CD8-positive, alpha-beta T cell (primary cell): ENCODE measurements at regions of chr6 and their contacts with region 1.

Region 1: GRCh38 chr6:25223490-25223991 is 55.6 kb upstream of the CARMIL1 start:
- DNase-seq: peak; percentile 19 to 79 (median 66)
- ATAC-seq: peak; percentile 61
- H3K4me3 ChIP-seq: peak overlapping the region in 1 of 2 experiments; percentile 23
- H3K4me3 Mint-ChIP-seq: peak overlapping the region; percentile 72
- H3K27ac ChIP-seq: no peak overlapping the region
- H3K27ac Mint-ChIP-seq: no peak overlapping the region
- H3K4me1 ChIP-seq: peaks cover 6% of the 10 kb centered on the region
- H3K4me1 Mint-ChIP-seq: peaks cover 10% of the 10 kb centered on the region
- H3K27me3 ChIP-seq: no peaks in the 10 kb centered on the region
- H3K27me3 Mint-ChIP-seq: peaks cover 7% of the 10 kb centered on the region
- CTCF ChIP-seq: peak; percentile 96

Region 2: DNA sequence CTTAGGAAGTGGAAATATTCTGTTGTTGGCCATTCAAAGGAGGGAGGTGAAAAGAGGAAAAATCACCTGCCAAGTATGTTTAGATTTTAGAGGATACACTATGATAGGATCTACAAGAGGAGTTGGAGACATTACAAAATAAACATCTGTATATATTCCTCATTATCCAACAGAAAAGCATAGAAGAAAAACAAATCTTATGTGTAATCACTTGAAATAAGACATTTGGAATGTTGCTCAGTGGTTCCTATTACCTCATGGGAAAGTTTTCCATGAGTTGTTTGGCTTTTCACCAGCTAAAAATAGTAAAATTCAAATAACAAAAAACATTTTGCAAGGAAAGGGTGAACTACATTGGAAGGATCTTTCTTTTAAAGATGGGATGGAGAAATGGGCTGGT is 21.0 kb before region 1 on chr6:
- CTCF ChIA-PET with region 1: interaction called, 11 read pairs
- POLR2A ChIA-PET with region 1: no interaction called
- intact Hi-C with region 1: no loop called
- DNase-seq: no peak
- ATAC-seq: no peak
- H3K4me3 ChIP-seq: no peak overlapping the region
- H3K4me3 Mint-ChIP-seq: no peak overlapping the region
- H3K27ac ChIP-seq: no peak overlapping the region
- H3K27ac Mint-ChIP-seq: no peak overlapping the region
- H3K4me1 ChIP-seq: no peaks in the 10 kb centered on the region
- H3K4me1 Mint-ChIP-seq: no peaks in the 10 kb centered on the region
- H3K27me3 ChIP-seq: no peaks in the 10 kb centered on the region
- H3K27me3 Mint-ChIP-seq: no peaks in the 10 kb centered on the region
- CTCF ChIP-seq: no peak

Region 3: DNA sequence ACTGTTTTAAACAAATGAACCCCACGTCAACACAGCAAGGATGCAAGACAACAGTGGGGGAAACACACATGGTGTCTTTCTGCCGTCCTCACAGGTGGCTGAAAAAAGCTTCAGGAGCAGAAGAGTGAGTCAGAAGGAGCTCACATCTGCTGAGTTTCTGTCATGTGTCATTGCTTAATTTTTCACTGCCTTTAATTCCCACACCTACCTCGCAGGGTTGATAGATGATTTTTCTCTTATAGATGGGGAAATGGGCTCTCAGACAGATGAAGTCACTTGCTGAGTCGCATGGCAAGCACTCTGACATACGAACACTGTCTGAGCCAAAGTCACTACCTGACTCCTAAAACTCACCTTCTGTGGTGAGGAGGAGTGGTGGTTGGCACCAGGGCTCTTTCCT is 27.3 kb after region 1 on chr6:
- CTCF ChIA-PET with region 1: interaction called, 12 read pairs
- POLR2A ChIA-PET with region 1: no interaction called
- intact Hi-C with region 1: no loop called
- DNase-seq: no peak
- ATAC-seq: no peak
- H3K4me3 ChIP-seq: no peak overlapping the region
- H3K4me3 Mint-ChIP-seq: no peak overlapping the region
- H3K27ac ChIP-seq: no peak overlapping the region
- H3K27ac Mint-ChIP-seq: no peak overlapping the region
- H3K4me1 ChIP-seq: no peaks in the 10 kb centered on the region
- H3K4me1 Mint-ChIP-seq: no peaks in the 10 kb centered on the region
- H3K27me3 ChIP-seq: no peaks in the 10 kb centered on the region
- H3K27me3 Mint-ChIP-seq: peaks cover 13% of the 10 kb centered on the region
- CTCF ChIP-seq: no peak

Region 4: GRCh38 chr6:25458485-25458884 is 234.9 kb after region 1 on chr6:
- CTCF ChIA-PET with region 1: no interaction called
- POLR2A ChIA-PET with region 1: no interaction called
- intact Hi-C with region 1: no loop called
- DNase-seq: no peak
- ATAC-seq: no peak
- H3K4me3 ChIP-seq: no peak overlapping the region
- H3K4me3 Mint-ChIP-seq: no peak overlapping the region
- H3K27ac ChIP-seq: no peak overlapping the region
- H3K27ac Mint-ChIP-seq: no peak overlapping the region
- H3K4me1 ChIP-seq: no peaks in the 10 kb centered on the region
- H3K4me1 Mint-ChIP-seq: no peaks in the 10 kb centered on the region
- H3K27me3 ChIP-seq: no peaks in the 10 kb centered on the region
- H3K27me3 Mint-ChIP-seq: no peaks in the 10 kb centered on the region
- CTCF ChIP-seq: no peak

Region 5: GRCh38 chr6:25550631-25551030 is 327.1 kb after region 1 on chr6:
- CTCF ChIA-PET with region 1: interaction called, 56 read pairs
- POLR2A ChIA-PET with region 1: no interaction called
- intact Hi-C with region 1: no loop called
- DNase-seq: no peak
- ATAC-seq: no peak
- H3K4me3 ChIP-seq: no peak overlapping the region
- H3K4me3 Mint-ChIP-seq: no peak overlapping the region
- H3K27ac ChIP-seq: no peak overlapping the region
- H3K27ac Mint-ChIP-seq: no peak overlapping the region
- H3K4me1 ChIP-seq: no peaks in the 10 kb centered on the region
- H3K4me1 Mint-ChIP-seq: no peaks in the 10 kb centered on the region
- H3K27me3 ChIP-seq: no peaks in the 10 kb centered on the region
- H3K27me3 Mint-ChIP-seq: no peaks in the 10 kb centered on the region
- CTCF ChIP-seq: no peak

Region 6: DNA sequence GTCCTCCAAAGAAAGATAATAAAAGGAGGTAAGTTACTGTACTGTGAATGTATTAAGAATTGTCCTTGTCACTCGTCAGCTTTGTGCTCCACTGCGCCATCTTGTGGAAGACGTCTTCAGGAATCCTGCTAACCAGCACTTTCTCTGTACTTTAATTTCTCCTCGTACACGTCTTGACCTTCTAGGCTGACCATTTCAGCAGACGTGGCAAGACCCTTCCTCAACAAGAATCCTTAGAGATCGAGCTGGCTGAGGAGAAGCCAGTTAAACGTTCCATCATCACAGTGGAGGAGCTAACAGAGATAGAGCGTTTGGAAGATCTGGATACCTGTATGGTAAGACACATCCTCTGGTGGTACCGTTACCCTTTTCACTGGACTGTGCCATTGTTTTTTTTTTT is 333.0 kb after region 1 on chr6:
- CTCF ChIA-PET with region 1: interaction called, 56 read pairs
- POLR2A ChIA-PET with region 1: interaction called, 5 read pairs
- intact Hi-C with region 1: loop called (anchors 1 kb)
- DNase-seq: peak; percentile 61 to 83 (median 76)
- ATAC-seq: peak; percentile 54
- H3K4me3 ChIP-seq: no peak overlapping the region
- H3K4me3 Mint-ChIP-seq: no peak overlapping the region
- H3K27ac ChIP-seq: no peak overlapping the region
- H3K27ac Mint-ChIP-seq: no peak overlapping the region
- H3K4me1 ChIP-seq: no peaks in the 10 kb centered on the region
- H3K4me1 Mint-ChIP-seq: peaks cover 2% of the 10 kb centered on the region
- H3K27me3 ChIP-seq: no peaks in the 10 kb centered on the region
- H3K27me3 Mint-ChIP-seq: no peaks in the 10 kb centered on the region
- CTCF ChIP-seq: peak; percentile 93

Region 7: DNA sequence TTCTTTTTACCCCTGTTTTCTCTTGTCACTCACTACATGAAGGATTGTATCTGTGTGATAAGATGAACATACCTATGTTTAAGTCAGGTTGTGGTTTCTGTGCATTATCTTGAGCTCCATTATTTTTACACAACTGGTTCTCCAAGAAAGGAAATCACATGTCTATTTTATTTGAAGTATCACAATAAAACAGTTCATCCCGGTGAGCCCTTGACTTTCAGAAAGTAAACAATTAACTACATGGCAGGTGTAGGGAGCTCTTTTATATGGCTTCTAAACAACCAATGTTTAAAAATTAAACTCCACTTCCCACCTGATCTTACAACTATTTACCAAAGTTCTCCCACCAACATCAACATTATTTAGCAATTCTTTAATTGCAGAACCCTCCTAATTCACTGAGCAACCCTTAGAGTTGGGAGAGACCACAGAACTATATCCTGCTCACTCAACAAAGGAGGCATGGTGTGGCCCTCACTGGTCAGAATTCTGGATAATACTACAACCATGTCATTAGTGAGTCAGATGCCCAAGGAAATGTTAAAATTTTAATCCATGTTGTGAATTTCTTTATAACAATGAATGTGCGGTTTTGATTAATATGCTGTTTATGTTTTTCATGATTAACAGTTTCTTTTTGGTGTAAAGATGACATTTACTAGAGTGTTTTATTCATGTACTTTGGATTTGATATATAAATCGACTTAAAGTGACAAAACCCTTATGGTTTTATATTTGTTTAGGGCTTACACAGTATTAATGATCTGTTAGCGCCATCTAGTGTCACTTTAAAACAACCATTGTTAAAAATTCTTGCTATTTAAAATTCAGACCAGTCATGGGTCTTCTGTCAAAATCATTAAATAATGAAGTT is 378.5 kb after region 1 on chr6:
- CTCF ChIA-PET with region 1: interaction called, 13 read pairs
- POLR2A ChIA-PET with region 1: no interaction called
- intact Hi-C with region 1: loop called (anchors 1 kb)
- DNase-seq: peak in 2 of 9 experiments; percentile 59 to 72
- ATAC-seq: no peak
- H3K4me3 ChIP-seq: no peak overlapping the region
- H3K4me3 Mint-ChIP-seq: no peak overlapping the region
- H3K27ac ChIP-seq: no peak overlapping the region
- H3K27ac Mint-ChIP-seq: no peak overlapping the region
- H3K4me1 ChIP-seq: no peaks in the 10 kb centered on the region
- H3K4me1 Mint-ChIP-seq: peaks cover 3% of the 10 kb centered on the region
- H3K27me3 ChIP-seq: no peaks in the 10 kb centered on the region
- H3K27me3 Mint-ChIP-seq: no peaks in the 10 kb centered on the region
- CTCF ChIP-seq: peak; percentile 81

Region 8: GRCh38 chr6:25717866-25718740 is 494.6 kb after region 1 on chr6:
- CTCF ChIA-PET with region 1: interaction called, 6 read pairs
- POLR2A ChIA-PET with region 1: no interaction called
- intact Hi-C with region 1: loop called in 1 of 2 experiments (anchors 5 kb)
- DNase-seq: peak in 2 of 9 experiments; percentile 23 to 33
- ATAC-seq: no peak
- H3K4me3 ChIP-seq: no peak overlapping the region
- H3K4me3 Mint-ChIP-seq: no peak overlapping the region
- H3K27ac ChIP-seq: no peak overlapping the region
- H3K27ac Mint-ChIP-seq: no peak overlapping the region
- H3K4me1 ChIP-seq: no peaks in the 10 kb centered on the region
- H3K4me1 Mint-ChIP-seq: no peaks in the 10 kb centered on the region
- H3K27me3 ChIP-seq: no peaks in the 10 kb centered on the region
- H3K27me3 Mint-ChIP-seq: peaks cover 14% of the 10 kb centered on the region
- CTCF ChIP-seq: peak; percentile 52